ENCODE measurements at regions of chr6 and their contacts with region 1.

Region 1: GRCh38 chr6:108835218-108835850 is 12.9 kb upstream of the ARMC2 start:
- DNase-seq: peak; percentile 89
- ATAC-seq: peak; percentile 93 to 94

Region 2: DNA sequence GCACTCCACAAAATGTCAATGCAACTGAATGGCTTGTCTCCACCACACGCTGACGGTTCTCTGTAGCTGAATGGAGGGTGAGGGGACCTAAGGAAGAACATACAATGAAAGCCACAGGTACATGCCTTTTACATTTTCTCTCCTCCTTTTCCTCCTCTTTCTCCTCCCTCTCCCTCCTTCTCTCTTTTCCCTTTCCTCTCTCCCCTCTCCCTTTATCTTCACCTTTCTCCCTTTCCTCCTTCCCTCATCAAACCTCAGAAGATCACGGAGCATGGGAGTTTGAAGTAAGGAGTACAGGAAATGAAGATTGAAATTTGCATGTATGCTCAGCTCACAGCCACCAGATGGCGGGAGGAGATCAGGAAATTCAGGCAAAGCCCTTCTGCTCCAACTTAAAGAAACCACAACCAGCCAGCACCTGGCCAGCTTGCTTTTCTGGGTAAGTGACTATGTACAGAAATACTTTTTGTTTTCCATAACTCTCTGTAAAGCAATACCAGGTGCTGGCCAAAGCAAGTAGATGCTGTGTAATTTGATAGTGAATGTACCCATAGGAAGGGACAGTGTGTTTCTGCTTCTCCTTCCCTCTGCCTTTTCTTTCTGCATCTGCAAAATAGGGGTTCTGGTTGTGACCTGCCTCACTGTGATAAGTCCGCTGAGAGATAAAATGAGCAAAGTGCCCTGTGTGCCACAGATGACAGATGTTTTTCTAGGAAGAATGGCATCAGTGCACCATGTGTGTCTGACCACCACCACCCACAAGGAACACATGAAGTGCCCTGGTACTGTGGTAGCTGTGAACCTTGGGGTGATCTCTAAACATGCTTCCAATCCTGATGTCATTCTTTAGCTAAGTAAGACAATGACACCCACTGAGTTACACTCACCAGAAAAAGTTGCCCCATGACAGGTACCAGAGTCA is 293.2 kb before region 1 on chr6:
- intact Hi-C with region 1: loop called (anchors 2 to 5 kb)
- DNase-seq: peak; percentile 60
- ATAC-seq: peak; percentile 85 to 88

Region 3: GRCh38 chr6:108549732-108550131 is 285.6 kb before region 1 on chr6:
- intact Hi-C with region 1: loop called in 1 of 2 experiments (anchors 5 kb)
- DNase-seq: no peak
- ATAC-seq: peak in 1 of 2 donors; percentile 26

Region 4: DNA sequence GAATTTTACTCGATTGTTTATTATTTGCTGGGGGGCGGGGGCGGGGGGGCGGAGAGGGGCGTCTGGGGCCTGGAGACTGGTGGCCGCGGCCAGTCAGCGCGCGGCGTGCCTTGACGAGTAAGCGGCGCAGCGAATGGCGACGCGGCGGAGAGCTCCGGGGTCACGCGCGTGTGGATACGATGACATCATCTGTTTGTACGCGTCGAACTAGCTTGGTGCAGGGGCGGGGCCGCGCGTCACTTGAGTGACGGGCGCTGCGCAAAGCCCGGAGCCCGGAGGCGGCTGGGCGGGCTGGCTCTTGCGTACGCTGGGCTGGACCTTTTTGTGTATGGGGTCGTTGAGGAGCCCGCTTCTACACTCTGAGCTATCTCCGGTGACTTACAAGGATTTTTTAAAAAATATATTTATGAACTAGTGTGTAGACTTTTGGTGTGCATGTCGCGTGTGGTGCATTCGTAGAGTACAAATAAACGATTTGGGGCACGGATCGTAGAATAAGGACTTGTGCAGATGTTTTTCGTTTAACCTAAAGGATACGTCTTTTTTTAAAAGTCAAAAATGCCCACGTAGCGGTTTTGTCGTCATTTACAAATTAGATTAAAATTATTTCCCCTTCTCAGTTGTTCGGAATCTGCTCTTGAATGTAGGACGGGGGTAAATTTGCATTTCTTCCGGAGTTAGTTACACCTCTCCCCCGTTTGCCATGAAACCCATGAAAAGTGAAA is 276.8 kb before region 1 on chr6:
- intact Hi-C with region 1: loop called (anchors 5 kb)
- DNase-seq: peak; percentile 99
- ATAC-seq: peak; percentile 69 to 74

Region 5: GRCh38 chr6:108782179-108783041 is 52.9 kb before region 1 on chr6:
- intact Hi-C with region 1: loop called in 1 of 2 experiments (anchors 10 kb)
- DNase-seq: peak; percentile 85
- ATAC-seq: peak; percentile 94 to 95

Region 6: DNA sequence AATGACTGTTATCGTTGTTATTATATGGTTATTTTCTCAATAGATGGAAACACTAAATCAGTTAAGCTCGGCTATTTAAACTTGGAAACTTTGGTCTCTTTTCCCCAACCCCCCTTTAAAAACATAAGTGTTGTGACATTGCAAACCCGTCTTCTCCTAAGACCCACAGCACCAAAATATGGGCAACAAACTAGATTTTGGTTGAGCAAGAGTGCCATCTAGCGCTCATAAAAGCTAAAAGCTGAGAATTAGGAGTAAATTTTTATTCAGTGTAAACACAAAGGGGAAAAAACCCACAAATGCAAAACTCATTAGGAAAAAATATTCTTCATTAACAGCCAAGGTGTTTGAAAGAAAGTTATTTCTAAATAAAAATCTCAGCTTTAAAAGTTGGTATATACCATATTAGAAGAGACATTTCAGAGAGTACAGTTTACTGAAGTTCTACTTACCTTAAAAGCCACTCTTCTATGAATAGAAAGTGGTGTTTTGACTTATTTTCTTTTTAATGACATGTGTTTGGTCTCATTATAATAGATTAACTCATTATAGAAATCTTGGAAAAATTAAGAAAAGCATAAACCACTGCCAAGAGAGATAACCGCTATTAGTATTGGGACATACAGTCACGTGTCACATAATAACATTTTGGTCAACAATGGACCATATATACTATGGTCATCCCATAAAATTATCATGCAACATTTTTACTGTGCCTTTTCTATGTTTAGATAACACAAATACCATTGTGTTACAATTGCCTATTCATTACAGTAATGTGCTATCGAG is 238.2 kb after region 1 on chr6:
- intact Hi-C with region 1: loop called in 1 of 2 experiments (anchors 5 kb)
- DNase-seq: no peak
- ATAC-seq: peak; percentile 62 to 71